ENCODE measurements at regions of chr7 and their contacts with region 1.

Region 1: DNA sequence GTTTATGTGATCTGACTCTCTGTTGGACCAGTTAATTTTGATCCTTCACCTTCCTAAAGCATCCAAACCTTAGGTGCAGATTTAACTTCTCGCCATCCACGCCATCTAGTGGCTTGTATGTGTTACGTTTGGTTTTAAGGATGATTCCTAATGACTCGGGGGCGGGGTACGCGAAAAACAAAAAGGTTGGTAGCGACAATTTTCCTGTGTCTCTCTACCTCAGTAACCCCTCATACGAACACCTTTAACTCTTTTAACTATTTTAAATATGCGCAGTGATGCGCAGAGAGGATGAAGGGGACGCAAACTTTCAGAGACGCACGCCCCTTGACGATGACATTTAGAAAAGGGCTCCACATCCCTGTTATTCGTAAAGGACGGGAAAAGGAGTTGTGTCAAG is 714 bp upstream of the KCND2 start:
- DNase-seq: peak; percentile 40
- H3K4me3 Mint-ChIP-seq: peak overlapping the region; percentile 90
- H3K27ac Mint-ChIP-seq: peak overlapping the region; percentile 54
- H3K4me1 Mint-ChIP-seq: no peaks in the 10 kb centered on the region
- H3K27me3 Mint-ChIP-seq: no peaks in the 10 kb centered on the region
- CTCF ChIP-seq: peak; percentile 53

Region 2: DNA sequence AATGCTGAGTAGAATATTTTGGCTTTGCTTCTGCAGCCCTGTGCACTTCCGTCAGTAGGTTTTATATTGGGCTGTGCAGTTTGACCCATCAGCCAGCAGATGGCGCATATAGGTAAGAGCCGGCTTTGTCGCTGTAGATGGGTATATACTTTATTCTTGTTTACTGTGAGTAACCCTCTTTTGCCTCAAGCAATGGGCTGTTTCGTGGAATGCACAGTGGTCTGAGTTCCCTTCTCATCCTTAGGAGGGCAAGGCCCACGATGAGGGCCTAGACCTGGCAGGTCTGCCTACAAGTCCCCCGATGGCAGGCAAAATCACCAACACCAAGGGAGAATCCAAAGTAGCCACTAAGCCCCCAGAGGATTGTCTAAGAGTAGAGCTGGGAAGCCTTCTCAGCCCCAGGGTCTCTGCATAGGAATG is 1002.2 kb before region 1 on chr7:
- CTCF ChIA-PET with region 1: no interaction called
- intact Hi-C with region 1: loop called (anchors 1 kb)
- DNase-seq: peak; percentile 58
- H3K4me3 Mint-ChIP-seq: no peak overlapping the region
- H3K27ac Mint-ChIP-seq: no peak overlapping the region
- H3K4me1 Mint-ChIP-seq: peaks cover 14% of the 10 kb centered on the region
- H3K27me3 Mint-ChIP-seq: no peaks in the 10 kb centered on the region
- CTCF ChIP-seq: peak; percentile 64

Region 3: DNA sequence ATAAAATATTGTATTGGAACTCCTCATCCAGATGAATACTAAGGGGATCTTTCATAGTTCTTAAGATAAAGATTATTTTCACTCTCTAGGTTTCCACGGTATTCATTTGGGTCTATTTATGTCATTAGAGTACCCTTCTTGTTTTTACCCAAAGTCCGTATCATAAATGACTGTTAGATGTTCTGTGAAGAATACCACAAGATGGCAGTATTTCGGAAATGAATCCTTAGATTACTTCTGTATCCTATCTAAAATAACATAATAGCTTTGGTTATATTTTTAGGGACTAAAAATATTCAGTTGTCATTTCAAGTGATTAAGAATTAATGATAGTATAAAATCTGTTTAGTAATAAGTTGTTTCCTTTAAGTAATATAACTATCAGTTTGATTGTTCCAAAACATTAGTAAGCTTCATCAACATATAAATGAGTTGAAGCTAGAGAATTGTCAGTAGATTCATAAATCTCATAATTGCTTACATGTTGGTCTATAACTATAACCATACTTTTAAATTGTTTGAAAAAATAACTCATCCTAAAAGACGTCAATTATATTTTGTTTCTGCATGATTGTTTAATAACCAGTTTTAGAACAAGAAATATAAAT is 336.7 kb before region 1 on chr7:
- CTCF ChIA-PET with region 1: interaction called, 11 read pairs
- intact Hi-C with region 1: loop called (anchors 1 kb)
- DNase-seq: no peak
- H3K4me3 Mint-ChIP-seq: no peak overlapping the region
- H3K27ac Mint-ChIP-seq: no peak overlapping the region
- H3K4me1 Mint-ChIP-seq: no peaks in the 10 kb centered on the region
- H3K27me3 Mint-ChIP-seq: no peaks in the 10 kb centered on the region
- CTCF ChIP-seq: peak; percentile 26

Region 4: GRCh38 chr7:120052884-120053382 is 219.3 kb before region 1 on chr7:
- CTCF ChIA-PET with region 1: no interaction called
- intact Hi-C with region 1: loop called (anchors 10 kb)
- DNase-seq: peak; percentile 40
- H3K4me3 Mint-ChIP-seq: no peak overlapping the region
- H3K27ac Mint-ChIP-seq: peak overlapping the region; percentile 69
- H3K4me1 Mint-ChIP-seq: peaks cover 42% of the 10 kb centered on the region
- H3K27me3 Mint-ChIP-seq: no peaks in the 10 kb centered on the region
- CTCF ChIP-seq: no peak

Region 5: GRCh38 chr7:120554960-120555571 is 282.8 kb after region 1 on chr7:
- CTCF ChIA-PET with region 1: interaction called, 4 read pairs
- intact Hi-C with region 1: loop called (anchors 1 kb)
- DNase-seq: peak; percentile 66
- H3K4me3 Mint-ChIP-seq: no peak overlapping the region
- H3K27ac Mint-ChIP-seq: no peak overlapping the region
- H3K4me1 Mint-ChIP-seq: no peaks in the 10 kb centered on the region
- H3K27me3 Mint-ChIP-seq: no peaks in the 10 kb centered on the region
- CTCF ChIP-seq: no peak

Region 6: DNA sequence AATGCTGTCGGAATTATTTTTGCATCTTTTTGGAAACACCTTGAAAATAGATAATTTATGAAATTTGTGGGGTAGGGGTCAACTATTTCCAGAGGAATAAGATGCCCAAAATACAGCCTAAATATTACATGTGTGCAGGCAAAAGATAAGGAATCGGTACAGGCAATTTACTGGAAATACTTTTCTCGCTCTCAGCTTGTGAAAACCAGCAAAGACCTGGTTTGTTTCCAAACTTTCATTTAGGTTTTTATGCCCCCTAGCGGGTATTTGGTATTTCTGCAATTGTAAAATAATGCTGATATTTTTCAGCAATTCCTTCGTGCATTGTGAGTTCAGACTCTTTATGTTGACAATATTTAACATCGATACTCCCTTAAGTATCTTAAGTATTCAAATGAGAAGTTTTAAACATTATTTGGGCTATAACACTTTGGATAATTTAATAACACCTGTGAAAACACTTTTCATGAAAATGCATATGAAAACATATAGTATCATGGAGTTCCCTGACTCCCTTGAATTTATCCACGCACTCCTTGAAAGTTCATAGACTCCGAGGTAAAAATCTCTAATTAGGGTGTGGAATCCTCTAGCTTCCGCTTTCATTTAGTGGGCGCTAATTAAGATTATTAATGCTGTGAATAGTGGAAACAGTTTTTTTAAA is 453.2 kb after region 1 on chr7:
- CTCF ChIA-PET with region 1: no interaction called
- intact Hi-C with region 1: loop called (anchors 5 kb)
- DNase-seq: no peak
- H3K4me3 Mint-ChIP-seq: no peak overlapping the region
- H3K27ac Mint-ChIP-seq: no peak overlapping the region
- H3K4me1 Mint-ChIP-seq: peaks cover 9% of the 10 kb centered on the region
- H3K27me3 Mint-ChIP-seq: no peaks in the 10 kb centered on the region
- CTCF ChIP-seq: peak; percentile 65